Right ventricle myocardium inferior (tissue), 1 donor: ENCODE measurements at regions of chr3 and their contacts with region 1.

Region 1: GRCh38 chr3:159837725-159838124 is 150.9 kb upstream of the IL12A start:
- DNase-seq: no peak
- ATAC-seq: no peak

Region 2: GRCh38 chr3:159852821-159853505 is 15.2 kb after region 1 on chr3:
- intact Hi-C with region 1: loop called (anchors 2 kb)
- DNase-seq: peak; percentile 84
- ATAC-seq: peak; percentile 86

Region 3: GRCh38 chr3:159902546-159903314 is 65.0 kb after region 1 on chr3:
- intact Hi-C with region 1: no loop called
- DNase-seq: no peak
- ATAC-seq: no peak

Region 4: GRCh38 chr3:160343132-160343531 is 505.4 kb after region 1 on chr3:
- intact Hi-C with region 1: no loop called
- DNase-seq: no peak
- ATAC-seq: no peak